SK-N-SH (cell line): ENCODE measurements at regions of chr15 and their contacts with region 1.

Region 1: GRCh38 chr15:32657198-32657883 is 15.8 kb downstream of the SCG5 start:
- DNase-seq: no peak
- H3K4me3 ChIP-seq: no peak overlapping the region
- H3K27ac ChIP-seq: peak overlapping the region in 1 of 2 experiments; percentile 76; a peak in 2 of 4 replicates
- H3K4me1 ChIP-seq: peaks cover 7 to 12% of the 10 kb centered on the region in 2 experiments; a peak in 3 of 4 replicates
- H3K27me3 ChIP-seq: no peaks in the 10 kb centered on the region
- CTCF ChIP-seq: peak; percentile 26
- EP300 ChIP-seq: no peak
- RAD21 ChIP-seq: peak; percentile 8; the same call in 1 of the 2 replicates

Region 2: DNA sequence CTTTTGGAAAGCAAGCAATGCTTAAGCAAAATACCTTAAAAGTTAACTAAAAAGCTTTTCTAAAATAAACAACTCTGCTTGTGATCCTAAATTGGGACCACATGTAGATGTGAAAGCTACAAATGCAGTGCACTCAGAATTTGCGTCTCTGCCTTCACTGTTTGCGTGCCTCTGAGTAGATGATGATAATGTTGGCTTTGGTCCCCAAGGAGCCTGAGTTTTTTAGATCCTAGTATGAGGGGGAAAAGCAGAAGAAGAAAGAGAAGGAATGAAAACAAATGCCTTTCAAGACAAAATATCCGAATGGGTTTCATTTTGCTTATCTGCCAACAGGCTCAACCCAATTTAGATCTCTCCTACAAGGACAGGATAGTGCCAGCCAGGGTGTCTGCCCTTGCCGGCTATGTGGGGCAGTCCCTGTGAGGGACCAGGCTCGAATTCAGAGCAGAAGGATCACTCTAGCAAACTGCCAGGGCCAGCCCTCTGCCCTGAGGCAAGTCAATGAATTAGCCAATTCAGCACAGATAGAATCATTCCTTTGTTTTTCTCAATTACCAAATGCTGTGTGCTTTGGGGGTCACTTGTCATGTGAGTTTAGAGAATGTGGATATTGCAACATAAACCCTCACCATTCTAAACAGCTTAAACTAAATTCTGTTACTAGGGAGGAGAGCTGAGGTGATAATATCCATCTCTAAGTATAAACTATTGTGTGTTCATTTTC is 12.7 kb after region 1 on chr15:
- CTCF ChIA-PET with region 1: interaction called, 13 read pairs
- POLR2A ChIA-PET with region 1: no interaction called
- DNase-seq: peak; percentile 87
- H3K4me3 ChIP-seq: no peak overlapping the region
- H3K27ac ChIP-seq: peak overlapping the region; percentile 45 to 86; a peak in 3 of 4 replicates
- H3K4me1 ChIP-seq: peaks cover 0 to 18% of the 10 kb centered on the region in 2 experiments; a peak in 2 of 4 replicates
- H3K27me3 ChIP-seq: no peaks in the 10 kb centered on the region
- CTCF ChIP-seq: no peak
- EP300 ChIP-seq: peak in 1 of 2 experiments; percentile 92; a peak in 2 of 4 replicates
- RAD21 ChIP-seq: peak; percentile 32; the same call in 1 of the 2 replicates

Region 3: DNA sequence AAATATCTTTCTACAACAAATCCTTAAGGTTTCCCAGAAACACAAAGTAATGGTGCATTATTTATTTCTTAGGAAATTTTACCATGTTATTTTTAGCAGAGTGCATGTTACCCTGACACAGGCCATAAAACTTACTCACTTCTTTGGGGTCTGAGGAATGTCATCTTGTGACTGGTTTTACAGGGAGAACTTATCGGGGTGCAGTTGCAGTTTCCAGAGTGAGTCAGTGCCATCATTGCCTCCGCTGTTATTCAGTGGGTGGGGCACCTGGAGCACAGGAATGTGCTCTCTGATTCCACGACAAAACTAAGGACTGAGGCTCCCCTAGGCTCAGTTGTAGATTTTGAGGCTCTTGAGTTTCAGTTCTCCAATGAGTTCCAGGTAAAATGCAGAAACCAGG is 49.4 kb after region 1 on chr15:
- CTCF ChIA-PET with region 1: no interaction called
- POLR2A ChIA-PET with region 1: no interaction called
- DNase-seq: no peak
- H3K4me3 ChIP-seq: no peak overlapping the region
- H3K27ac ChIP-seq: peak overlapping the region; percentile 58 to 80; a peak in 3 of 4 replicates
- H3K4me1 ChIP-seq: peaks cover 0 to 19% of the 10 kb centered on the region in 2 experiments; a peak in 3 of 4 replicates
- H3K27me3 ChIP-seq: no peaks in the 10 kb centered on the region
- CTCF ChIP-seq: no peak
- EP300 ChIP-seq: peak in 1 of 2 experiments; percentile 36; a peak in 1 of 4 replicates
- RAD21 ChIP-seq: no peak

Region 4: GRCh38 chr15:32861761-32862160 is 204.4 kb after region 1 on chr15:
- CTCF ChIA-PET with region 1: interaction called, 10 read pairs
- POLR2A ChIA-PET with region 1: no interaction called
- DNase-seq: peak; percentile 13
- H3K4me3 ChIP-seq: no peak overlapping the region
- H3K27ac ChIP-seq: 0 out of 4 replicates have a peak overlapping the region, but pooled peaks of 1 of the 2 experiments have one; percentile 9
- H3K4me1 ChIP-seq: peaks cover 4 to 11% of the 10 kb centered on the region in 2 experiments; a peak in 2 of 4 replicates
- H3K27me3 ChIP-seq: no peaks in the 10 kb centered on the region
- CTCF ChIP-seq: no peak
- EP300 ChIP-seq: no peak
- RAD21 ChIP-seq: no peak

Region 5: DNA sequence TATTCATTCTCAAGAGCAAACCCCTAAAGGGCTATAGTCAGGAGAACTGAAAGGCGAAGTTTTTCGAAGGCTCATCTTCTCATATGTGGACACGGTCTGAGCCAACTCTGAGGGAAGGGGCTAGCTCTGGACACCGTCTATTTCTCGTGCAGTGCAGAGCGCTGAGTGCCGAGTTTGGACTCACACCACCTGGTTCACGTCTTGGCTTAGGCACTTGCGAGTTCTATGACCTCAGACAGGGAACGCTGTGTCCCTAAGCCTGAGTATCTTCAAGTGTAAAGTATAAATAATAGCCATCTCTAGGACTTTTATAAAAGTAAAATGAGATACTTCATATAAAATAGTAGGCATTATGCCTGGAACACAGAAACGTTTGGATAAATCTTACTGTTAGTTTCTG is 313.5 kb after region 1 on chr15:
- CTCF ChIA-PET with region 1: interaction called, 11 read pairs
- POLR2A ChIA-PET with region 1: no interaction called
- DNase-seq: no peak
- H3K4me3 ChIP-seq: no peak overlapping the region
- H3K27ac ChIP-seq: no peak overlapping the region
- H3K4me1 ChIP-seq: peaks cover 3 to 4% of the 10 kb centered on the region in 2 experiments; a peak in 2 of 4 replicates
- H3K27me3 ChIP-seq: no peaks in the 10 kb centered on the region
- CTCF ChIP-seq: no peak
- EP300 ChIP-seq: no peak
- RAD21 ChIP-seq: no peak